Naive thymus-derived CD4-positive, alpha-beta T cell (primary cell): ENCODE measurements at regions of chr5 and their contacts with region 1.

Region 1: DNA sequence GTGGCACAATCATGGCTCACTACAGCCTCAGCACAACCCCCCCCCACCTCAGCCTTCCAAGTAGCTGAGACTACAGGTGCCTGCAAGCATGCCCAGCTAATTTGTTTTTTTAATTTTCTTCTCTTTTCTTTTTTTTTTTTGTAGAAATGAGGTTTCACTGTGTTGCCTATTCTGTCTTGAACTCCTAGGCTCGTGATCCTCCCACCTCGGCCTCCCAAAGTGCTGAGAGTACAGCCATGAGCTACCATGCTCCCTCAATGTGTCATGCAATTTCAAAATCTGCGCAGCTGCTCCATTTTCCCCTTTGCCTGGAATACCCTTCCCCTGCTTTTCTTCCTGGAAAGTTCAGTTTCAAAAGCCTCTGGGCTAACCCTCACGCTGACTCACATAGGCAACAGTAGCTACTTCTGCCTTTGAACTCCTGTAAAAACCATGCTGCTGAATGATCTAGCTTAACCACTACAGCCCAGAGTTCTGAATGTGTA is 71.0 kb upstream of the IL7R start:
- DNase-seq: peak in 1 of 9 donors; percentile 57
- ATAC-seq: peak; percentile 36
- H3K4me3 ChIP-seq: no peak overlapping the region
- H3K4me3 Mint-ChIP-seq: peak overlapping the region; percentile 16 to 68 (median 60)
- H3K27ac ChIP-seq: no peak overlapping the region
- H3K27ac Mint-ChIP-seq: peak overlapping the region; percentile 20 to 89 (median 68)
- H3K4me1 ChIP-seq: peaks cover 38 to 53% of the 10 kb centered on the region in 2 donors
- H3K4me1 Mint-ChIP-seq: peaks cover 29 to 97% (median 88%) of the 10 kb centered on the region in 7 donors
- H3K27me3 ChIP-seq: no peaks in the 10 kb centered on the region
- H3K27me3 Mint-ChIP-seq: no peaks in the 10 kb centered on the region

Region 2: GRCh38 chr5:35830587-35830986 is 44.9 kb after region 1 on chr5:
- CTCF ChIA-PET with region 1: interaction called, 4 read pairs
- POLR2A ChIA-PET with region 1: interaction called, 238 read pairs
- intact Hi-C with region 1: loop called in 1 of 2 experiments (anchors 2 kb)
- DNase-seq: peak in 7 of 9 donors; percentile 77 to 92 (median 89)
- ATAC-seq: peak; percentile 94
- H3K4me3 ChIP-seq: peak overlapping the region; percentile 4
- H3K4me3 Mint-ChIP-seq: peak overlapping the region; percentile 1 to 78 (median 70)
- H3K27ac ChIP-seq: peak overlapping the region; percentile 59
- H3K27ac Mint-ChIP-seq: peak overlapping the region; percentile 82 to 98 (median 89)
- H3K4me1 ChIP-seq: peaks cover 69 to 78% of the 10 kb centered on the region in 2 donors
- H3K4me1 Mint-ChIP-seq: peaks cover 53 to 99% (median 90%) of the 10 kb centered on the region in 7 donors
- H3K27me3 ChIP-seq: no peaks in the 10 kb centered on the region
- H3K27me3 Mint-ChIP-seq: no peaks in the 10 kb centered on the region

Region 3: DNA sequence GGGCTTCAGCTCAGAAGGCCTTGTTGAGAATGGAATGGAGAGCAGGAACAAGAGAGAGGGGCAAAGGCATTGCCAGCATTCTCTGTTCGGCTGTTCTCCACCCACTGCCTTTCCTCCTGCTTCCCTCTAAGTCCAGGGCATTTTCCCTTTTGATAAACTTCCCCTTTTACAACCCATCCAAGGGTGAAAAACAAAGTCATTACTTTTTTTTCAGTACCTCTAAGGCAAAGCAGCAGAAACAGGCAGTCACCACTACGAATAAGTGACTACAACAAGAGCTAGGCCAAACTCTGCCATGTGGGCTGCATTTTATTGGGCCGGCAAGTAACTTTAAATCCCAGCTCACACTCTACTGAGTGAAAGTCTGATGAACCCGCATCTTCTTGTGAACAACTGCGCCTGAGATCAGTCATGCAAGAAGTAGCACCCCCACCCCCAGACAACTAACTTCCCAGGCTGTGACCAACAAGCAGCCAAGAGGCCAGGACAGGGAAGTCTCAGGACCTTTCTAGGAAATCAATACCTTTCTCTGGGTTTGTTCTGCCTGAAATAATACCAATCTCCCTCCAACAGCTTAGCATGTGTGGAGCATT is 84.1 kb after region 1 on chr5:
- CTCF ChIA-PET with region 1: interaction called, 61 read pairs
- POLR2A ChIA-PET with region 1: interaction called, 979 read pairs
- intact Hi-C with region 1: no loop called
- DNase-seq: no peak
- ATAC-seq: no peak
- H3K4me3 ChIP-seq: no peak overlapping the region
- H3K4me3 Mint-ChIP-seq: peak overlapping the region in 7 of 10 donors; percentile 44 to 87 (median 51)
- H3K27ac ChIP-seq: peak overlapping the region; percentile 65
- H3K27ac Mint-ChIP-seq: peak overlapping the region; percentile 47 to 97 (median 86)
- H3K4me1 ChIP-seq: peaks cover 41 to 54% of the 10 kb centered on the region in 2 donors
- H3K4me1 Mint-ChIP-seq: peaks cover 46 to 99% (median 93%) of the 10 kb centered on the region in 7 donors
- H3K27me3 ChIP-seq: no peaks in the 10 kb centered on the region
- H3K27me3 Mint-ChIP-seq: no peaks in the 10 kb centered on the region

Region 4: GRCh38 chr5:35902046-35902676 is 116.5 kb after region 1 on chr5:
- CTCF ChIA-PET with region 1: no interaction called
- POLR2A ChIA-PET with region 1: interaction called, 3 read pairs
- intact Hi-C with region 1: loop called in 1 of 2 experiments (anchors 5 kb)
- DNase-seq: no peak
- ATAC-seq: peak; percentile 48
- H3K4me3 ChIP-seq: no peak overlapping the region
- H3K4me3 Mint-ChIP-seq: peak overlapping the region in 1 of 10 donors; percentile 57
- H3K27ac ChIP-seq: no peak overlapping the region
- H3K27ac Mint-ChIP-seq: peak overlapping the region in 2 of 9 donors; percentile 25 to 40
- H3K4me1 ChIP-seq: peaks cover 10 to 12% of the 10 kb centered on the region in 2 donors
- H3K4me1 Mint-ChIP-seq: peaks cover 28 to 76% (median 63%) of the 10 kb centered on the region in 7 donors
- H3K27me3 ChIP-seq: no peaks in the 10 kb centered on the region
- H3K27me3 Mint-ChIP-seq: no peaks in the 10 kb centered on the region